ENCODE measurements at regions of chr6 and their contacts with region 1.

Region 1: DNA sequence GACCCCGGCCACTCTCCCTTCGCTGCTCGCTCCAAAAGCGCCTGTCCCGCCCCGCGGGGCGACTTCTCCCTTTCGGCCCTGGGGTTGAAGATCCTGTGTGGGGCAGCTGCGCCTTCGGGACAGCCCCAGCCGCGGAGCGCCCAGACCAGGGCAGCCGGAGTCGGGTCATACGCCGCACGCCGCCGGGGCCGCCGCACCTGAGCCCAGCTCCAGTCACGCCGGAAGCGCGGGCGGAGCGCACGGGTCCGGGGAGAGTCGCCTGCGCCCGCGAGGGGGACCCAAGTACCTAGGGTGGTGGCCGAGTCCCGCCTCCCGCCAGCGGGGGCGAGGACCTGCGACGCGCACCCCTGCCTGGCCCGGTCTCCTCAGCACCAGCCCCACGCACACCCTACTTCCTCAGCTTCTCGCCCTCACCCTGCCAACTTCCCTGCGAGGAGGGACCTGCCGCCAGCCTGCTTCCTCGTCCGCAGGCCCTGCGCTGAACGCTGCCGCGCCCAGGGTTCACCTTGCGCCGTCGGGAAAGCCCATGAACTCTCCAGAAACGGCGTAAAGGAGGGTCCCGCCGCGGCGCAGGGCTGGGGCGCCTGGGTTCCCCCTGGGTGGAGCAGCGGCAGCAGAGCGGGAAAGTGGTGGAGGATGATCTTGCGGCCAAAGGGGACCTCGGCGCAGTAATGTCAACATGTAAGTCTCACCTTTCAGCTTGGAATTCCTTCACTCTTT is at the start of gene ADGRG6:
- DNase-seq: peak; percentile 72
- H3K4me3 ChIP-seq: peak within 1 kb of the TSS; percentile 82 to 90 (median 89)
- H3K27ac ChIP-seq: peak within 1 kb of the TSS; percentile 91
- H3K4me1 ChIP-seq: peaks cover 40% of the 10 kb centered on the region
- H3K27me3 ChIP-seq: no peaks in the 10 kb centered on the region
- CTCF ChIP-seq: peak in 1 of 2 donors; percentile 9
- POLR2A ChIP-seq: peak; percentile 15
- total RNA-seq, gene ADGRG6: 99.3 and 113 TPM in 2 replicates

Region 2: GRCh38 chr6:142155895-142156757 is 145.7 kb before region 1 on chr6:
- CTCF ChIA-PET with region 1: interaction called, 16 read pairs
- POLR2A ChIA-PET with region 1: no interaction called
- dilution Hi-C with region 1: no loop called
- intact Hi-C with region 1: loop called (anchors 1 kb)
- DNase-seq: peak; percentile 76
- H3K4me3 ChIP-seq: peak overlapping the region in 1 of 3 experiments; percentile 13
- H3K27ac ChIP-seq: peak overlapping the region; percentile 74
- H3K4me1 ChIP-seq: peaks cover 38% of the 10 kb centered on the region
- H3K27me3 ChIP-seq: no peaks in the 10 kb centered on the region
- CTCF ChIP-seq: peak; percentile 7 to 24
- POLR2A ChIP-seq: no peak

Region 3: GRCh38 chr6:142236691-142237090 is 65.1 kb before region 1 on chr6:
- CTCF ChIA-PET with region 1: interaction called, 45 read pairs
- POLR2A ChIA-PET with region 1: no interaction called
- dilution Hi-C with region 1: no loop called
- intact Hi-C with region 1: loop called (anchors 2 kb)
- DNase-seq: no peak
- H3K4me3 ChIP-seq: no peak overlapping the region
- H3K27ac ChIP-seq: no peak overlapping the region
- H3K4me1 ChIP-seq: no peaks in the 10 kb centered on the region
- H3K27me3 ChIP-seq: no peaks in the 10 kb centered on the region
- CTCF ChIP-seq: no peak
- POLR2A ChIP-seq: no peak

Region 4: DNA sequence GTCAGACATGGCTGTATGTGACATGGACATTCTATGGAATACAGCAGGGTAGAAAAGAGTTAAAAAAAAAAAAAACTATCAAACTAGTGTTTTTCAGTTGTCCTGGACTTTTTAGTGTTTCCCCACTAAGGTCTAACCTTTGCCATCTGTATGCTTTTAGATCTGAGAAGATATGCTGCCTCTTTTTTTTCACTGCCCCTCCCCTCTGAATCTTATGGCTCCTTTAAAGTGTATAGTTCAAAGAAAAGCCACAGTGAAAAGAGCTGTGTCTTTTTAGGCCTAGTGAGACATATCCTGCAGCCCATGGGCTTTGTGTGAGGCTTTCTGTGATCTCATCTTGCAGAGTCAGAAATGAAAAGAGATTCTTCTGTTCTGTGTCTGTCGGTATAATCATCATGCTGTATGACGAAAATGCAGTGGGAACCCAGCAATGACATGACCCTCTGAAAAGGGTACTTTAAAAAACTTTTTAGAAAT is 29.3 kb after region 1 on chr6:
- CTCF ChIA-PET with region 1: interaction called, 5 read pairs
- POLR2A ChIA-PET with region 1: interaction called, 5 read pairs
- dilution Hi-C with region 1: no loop called
- intact Hi-C with region 1: loop called (anchors 1 kb)
- DNase-seq: peak; percentile 81
- H3K4me3 ChIP-seq: peak overlapping the region in 1 of 3 experiments; percentile 23
- H3K27ac ChIP-seq: peak overlapping the region; percentile 96
- H3K4me1 ChIP-seq: peaks cover 68% of the 10 kb centered on the region
- H3K27me3 ChIP-seq: no peaks in the 10 kb centered on the region
- CTCF ChIP-seq: no peak
- POLR2A ChIP-seq: no peak

Region 5: DNA sequence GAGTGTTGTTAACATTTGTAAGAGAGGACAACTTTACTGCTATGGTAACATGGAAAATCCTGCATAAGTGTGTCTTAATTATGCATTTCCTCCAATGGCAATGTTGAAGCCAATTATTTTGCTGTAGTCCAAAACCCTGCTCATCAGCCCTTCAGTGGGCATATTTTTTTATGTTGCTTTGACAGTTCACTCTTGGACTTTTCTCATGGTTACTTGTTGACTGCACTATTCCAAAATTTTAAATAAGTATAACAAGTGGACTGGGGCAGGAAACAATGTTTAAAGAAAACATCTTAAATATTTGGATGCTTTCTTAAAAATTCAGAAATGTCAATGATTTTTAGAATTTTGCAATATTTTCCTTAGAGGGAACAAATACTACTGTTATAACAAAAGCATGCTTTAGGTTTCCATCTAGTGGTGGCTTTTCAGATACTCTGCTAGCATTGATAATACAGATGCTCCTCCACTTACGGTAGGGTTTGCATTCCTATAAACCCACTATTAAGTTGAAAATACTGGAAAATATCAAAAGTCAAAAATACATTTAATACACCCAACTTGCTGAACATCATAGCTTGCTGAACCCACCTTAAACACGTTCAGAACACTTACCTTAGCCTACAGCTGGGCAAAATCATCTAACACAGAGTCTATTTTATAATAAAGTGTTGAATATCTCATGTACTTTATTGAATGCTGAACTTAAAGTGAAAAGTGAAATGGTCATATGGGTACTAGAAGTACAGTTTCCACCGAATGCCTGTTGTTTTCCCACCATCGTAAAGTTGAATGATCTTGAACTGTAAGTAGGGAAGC is 86.4 kb after region 1 on chr6:
- CTCF ChIA-PET with region 1: interaction called, 18 read pairs
- POLR2A ChIA-PET with region 1: no interaction called
- dilution Hi-C with region 1: no loop called
- intact Hi-C with region 1: loop called (anchors 1 kb)
- DNase-seq: peak; percentile 81
- H3K4me3 ChIP-seq: no peak overlapping the region
- H3K27ac ChIP-seq: peak overlapping the region; percentile 11
- H3K4me1 ChIP-seq: peaks cover 7% of the 10 kb centered on the region
- H3K27me3 ChIP-seq: no peaks in the 10 kb centered on the region
- CTCF ChIP-seq: peak; percentile 47 to 50
- POLR2A ChIP-seq: no peak

Region 6: DNA sequence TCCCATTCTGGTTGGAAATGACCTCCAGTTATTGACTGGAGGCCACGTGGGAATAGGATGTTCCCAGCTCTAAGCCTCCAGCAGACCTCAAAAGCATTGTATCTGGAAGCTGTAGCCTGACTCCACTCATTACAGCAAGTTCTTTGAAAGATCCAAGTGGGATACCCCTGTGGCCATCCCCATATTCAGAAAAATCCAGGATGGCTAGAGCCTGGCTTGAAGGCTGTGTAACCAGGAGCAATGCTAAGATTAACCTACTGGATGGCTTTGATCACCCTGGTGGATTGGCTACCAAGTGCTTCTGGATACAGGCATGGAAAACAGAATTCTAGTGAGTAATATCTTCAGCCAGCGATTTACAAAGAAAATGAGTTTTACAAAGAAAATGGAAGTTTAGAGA is 151.2 kb after region 1 on chr6:
- CTCF ChIA-PET with region 1: no interaction called
- POLR2A ChIA-PET with region 1: no interaction called
- dilution Hi-C with region 1: no loop called
- intact Hi-C with region 1: loop called (anchors 5 kb)
- DNase-seq: no peak
- H3K4me3 ChIP-seq: no peak overlapping the region
- H3K27ac ChIP-seq: no peak overlapping the region
- H3K4me1 ChIP-seq: no peaks in the 10 kb centered on the region
- H3K27me3 ChIP-seq: no peaks in the 10 kb centered on the region
- CTCF ChIP-seq: no peak
- POLR2A ChIP-seq: no peak

Region 7: DNA sequence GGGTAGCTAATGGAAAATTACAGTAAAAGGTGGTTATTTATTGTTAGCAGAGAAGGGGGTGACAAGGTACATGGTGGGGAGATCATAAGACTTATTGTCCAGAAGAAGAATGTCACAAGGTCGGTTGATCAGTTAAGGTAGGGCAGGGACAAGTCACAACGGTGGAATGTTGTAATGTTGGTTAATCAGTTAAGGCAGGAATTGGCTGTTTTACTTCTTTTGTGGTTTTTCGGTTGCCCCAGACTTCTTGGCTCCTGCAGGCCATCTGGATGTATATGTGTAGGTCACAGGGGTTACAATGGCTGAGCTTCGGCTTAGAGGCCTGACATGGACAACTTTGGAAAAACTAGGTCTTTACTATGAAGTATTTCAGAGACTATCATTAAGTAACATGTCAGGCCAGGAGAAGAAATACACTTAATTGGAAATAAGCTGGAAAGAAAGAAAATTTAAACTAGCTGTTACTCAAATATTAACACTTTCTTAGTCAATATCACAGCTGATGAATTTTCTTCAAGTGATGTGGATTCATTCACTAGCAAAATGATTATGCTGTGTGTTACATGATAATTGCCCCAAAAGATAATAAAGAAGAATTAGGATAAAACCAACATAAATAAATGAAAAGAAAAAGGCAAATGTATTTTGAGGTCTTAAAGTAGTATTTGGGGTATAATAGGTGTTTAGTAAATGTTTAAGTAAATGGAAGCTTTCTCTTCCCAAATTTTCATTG is 763.3 kb after region 1 on chr6:
- CTCF ChIA-PET with region 1: no interaction called
- POLR2A ChIA-PET with region 1: no interaction called
- dilution Hi-C with region 1: no loop called
- intact Hi-C with region 1: no loop called
- DNase-seq: no peak
- H3K4me3 ChIP-seq: no peak overlapping the region
- H3K27ac ChIP-seq: no peak overlapping the region
- H3K4me1 ChIP-seq: peaks cover 4% of the 10 kb centered on the region
- H3K27me3 ChIP-seq: no peaks in the 10 kb centered on the region
- CTCF ChIP-seq: no peak
- POLR2A ChIP-seq: no peak